CD4-positive, alpha-beta T cell (primary cell): ENCODE measurements at regions of chr4 and their contacts with region 1.

Region 1: DNA sequence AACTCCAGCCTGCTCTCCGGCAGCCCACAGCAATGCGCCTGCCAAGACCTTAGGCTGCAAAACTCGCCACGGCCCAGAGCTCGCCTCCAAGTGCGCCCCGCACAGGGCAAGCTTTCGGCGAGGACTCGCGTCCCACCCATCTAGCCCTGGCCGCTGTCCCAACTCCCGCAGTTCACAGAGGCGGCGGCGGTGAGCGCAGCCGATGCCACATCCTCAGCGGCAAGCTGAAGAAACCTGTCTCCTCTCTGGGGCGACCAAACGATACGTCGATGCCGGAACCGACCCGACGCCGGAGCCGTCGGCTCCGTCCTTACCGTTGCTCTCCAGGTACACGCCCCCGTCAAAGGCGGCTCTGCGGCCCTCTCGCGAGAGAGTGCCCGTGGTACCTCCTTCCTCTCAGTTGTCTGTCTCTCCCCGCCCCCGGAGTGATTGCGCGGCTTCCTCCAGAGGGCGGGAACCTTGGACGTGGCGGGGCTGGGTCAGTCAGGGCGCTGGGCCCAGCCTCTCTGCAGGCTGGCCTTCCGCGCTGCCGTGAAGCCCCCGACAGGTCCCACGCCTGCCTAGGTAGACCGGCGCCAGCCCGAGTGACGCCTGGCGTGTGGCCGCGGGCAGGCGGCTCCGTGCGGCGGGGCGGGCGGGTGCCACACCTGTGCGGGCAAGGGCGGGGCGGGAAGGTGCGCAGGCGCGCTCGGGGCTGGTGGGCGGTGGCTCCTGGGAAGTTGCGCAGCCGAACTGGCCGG is 380 bp upstream of the RAB33B start:
- DNase-seq: peak; percentile 93 to 98 (median 96)
- ATAC-seq: peak; percentile 85
- H3K4me3 ChIP-seq: peak overlapping the region; percentile 90
- H3K4me3 Mint-ChIP-seq: peak overlapping the region; percentile 96
- H3K27ac ChIP-seq: peak overlapping the region; percentile 93
- H3K27ac Mint-ChIP-seq: peak overlapping the region; percentile 99
- H3K4me1 ChIP-seq: peaks cover 35% of the 10 kb centered on the region
- H3K4me1 Mint-ChIP-seq: peaks cover 80% of the 10 kb centered on the region
- H3K27me3 ChIP-seq: no peaks in the 10 kb centered on the region
- H3K27me3 Mint-ChIP-seq: no peaks in the 10 kb centered on the region
- CTCF ChIP-seq: peak; percentile 4

Region 2: GRCh38 chr4:139015269-139015947 is 438.1 kb before region 1 on chr4 and contains the start of gene NOCT:
- CTCF ChIA-PET with region 1: no interaction called
- POLR2A ChIA-PET with region 1: interaction called, 9 read pairs
- intact Hi-C with region 1: loop called in 1 of 2 experiments (anchors 5 kb)
- DNase-seq: peak; percentile 75 to 98 (median 86)
- ATAC-seq: peak; percentile 90
- H3K4me3 ChIP-seq: peak within 1 kb of the TSS; percentile 74
- H3K4me3 Mint-ChIP-seq: peak within 1 kb of the TSS; percentile 93
- H3K27ac ChIP-seq: peak within 1 kb of the TSS; percentile 78 to 87
- H3K27ac Mint-ChIP-seq: peak within 1 kb of the TSS; percentile 95
- H3K4me1 ChIP-seq: peaks cover 20% of the 10 kb centered on the region
- H3K4me1 Mint-ChIP-seq: peaks cover 26% of the 10 kb centered on the region
- H3K27me3 ChIP-seq: no peaks in the 10 kb centered on the region
- H3K27me3 Mint-ChIP-seq: no peaks in the 10 kb centered on the region
- CTCF ChIP-seq: no peak
- total RNA-seq, gene NOCT: 13.7 to 15.8 TPM

Region 3: GRCh38 chr4:139177868-139178611 is 275.5 kb before region 1 on chr4:
- CTCF ChIA-PET with region 1: no interaction called
- POLR2A ChIA-PET with region 1: interaction called, 11 read pairs
- intact Hi-C with region 1: loop called (anchors 5 kb)
- DNase-seq: peak; percentile 80 to 96 (median 90)
- ATAC-seq: peak; percentile 74
- H3K4me3 ChIP-seq: peak overlapping the region; percentile 85
- H3K4me3 Mint-ChIP-seq: peak overlapping the region; percentile 96
- H3K27ac ChIP-seq: peak overlapping the region; percentile 77 to 88
- H3K27ac Mint-ChIP-seq: peak overlapping the region; percentile 93
- H3K4me1 ChIP-seq: peaks cover 18% of the 10 kb centered on the region
- H3K4me1 Mint-ChIP-seq: peaks cover 26% of the 10 kb centered on the region
- H3K27me3 ChIP-seq: no peaks in the 10 kb centered on the region
- H3K27me3 Mint-ChIP-seq: no peaks in the 10 kb centered on the region
- CTCF ChIP-seq: no peak

Region 4: GRCh38 chr4:139416073-139416673 is 37.4 kb before region 1 on chr4:
- CTCF ChIA-PET with region 1: interaction called, 5 read pairs
- POLR2A ChIA-PET with region 1: interaction called, 3 read pairs
- intact Hi-C with region 1: loop called (anchors 2 to 5 kb)
- DNase-seq: peak in 4 of 14 experiments; percentile 50 to 77 (median 61)
- ATAC-seq: peak; percentile 32
- H3K4me3 ChIP-seq: no peak overlapping the region
- H3K4me3 Mint-ChIP-seq: no peak overlapping the region
- H3K27ac ChIP-seq: no peak overlapping the region
- H3K27ac Mint-ChIP-seq: no peak overlapping the region
- H3K4me1 ChIP-seq: peaks cover 5% of the 10 kb centered on the region
- H3K4me1 Mint-ChIP-seq: peaks cover 5% of the 10 kb centered on the region
- H3K27me3 ChIP-seq: no peaks in the 10 kb centered on the region
- H3K27me3 Mint-ChIP-seq: no peaks in the 10 kb centered on the region
- CTCF ChIP-seq: peak; percentile 77

Region 5: GRCh38 chr4:140529434-140529833 is 1075.9 kb after region 1 on chr4:
- CTCF ChIA-PET with region 1: no interaction called
- POLR2A ChIA-PET with region 1: no interaction called
- intact Hi-C with region 1: loop called in 1 of 2 experiments (anchors 5 kb)
- DNase-seq: no peak
- ATAC-seq: no peak
- H3K4me3 ChIP-seq: no peak overlapping the region
- H3K4me3 Mint-ChIP-seq: no peak overlapping the region
- H3K27ac ChIP-seq: no peak overlapping the region
- H3K27ac Mint-ChIP-seq: no peak overlapping the region
- H3K4me1 ChIP-seq: peaks cover 1% of the 10 kb centered on the region
- H3K4me1 Mint-ChIP-seq: peaks cover 14% of the 10 kb centered on the region
- H3K27me3 ChIP-seq: no peaks in the 10 kb centered on the region
- H3K27me3 Mint-ChIP-seq: no peaks in the 10 kb centered on the region
- CTCF ChIP-seq: no peak